Activated CD4-positive, alpha-beta memory T cell treated with anti-CD3 and anti-CD28 coated beads for 36 hours (primary cell): ENCODE measurements at regions of chr21 and their contacts with region 1.

Region 1: GRCh38 chr21:25734904-25735645 is at the starts of genes ATP5PF and GABPA:
- DNase-seq: peak; percentile 99
- H3K4me3 Mint-ChIP-seq: peak within 1 kb of the TSS; percentile 98
- H3K27ac Mint-ChIP-seq: peak within 1 kb of the TSS; percentile 100
- H3K4me1 Mint-ChIP-seq: peaks cover 52% of the 10 kb centered on the region
- H3K27me3 Mint-ChIP-seq: peaks cover 1% of the 10 kb centered on the region
- total RNA-seq, gene ATP5PF: 150 to 151 TPM
- total RNA-seq, gene GABPA: 22.3 to 24.7 TPM

Region 2: DNA sequence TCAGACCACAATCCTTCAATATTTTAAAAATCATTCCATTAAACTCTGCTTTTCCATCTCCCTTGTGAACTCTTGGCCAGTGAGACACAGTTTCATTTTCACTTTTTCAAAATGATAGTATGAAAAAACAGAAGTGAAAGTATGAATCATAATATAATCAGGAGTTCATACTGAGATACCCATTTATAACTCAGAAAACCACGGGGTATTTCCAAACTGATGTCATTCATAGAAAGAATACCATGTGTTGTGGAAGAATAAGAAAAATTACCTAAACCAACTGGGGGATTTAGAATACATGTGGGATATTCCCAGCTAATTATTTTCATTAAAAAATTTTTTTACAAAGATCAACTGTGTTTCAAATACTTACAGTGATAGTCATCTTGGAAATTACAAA is 277.7 kb before region 1 on chr21:
- CTCF ChIA-PET with region 1: no interaction called
- POLR2A ChIA-PET with region 1: no interaction called
- intact Hi-C with region 1: loop called (anchors 1 kb)
- DNase-seq: no peak
- H3K4me3 Mint-ChIP-seq: peak overlapping the region; percentile 68
- H3K27ac Mint-ChIP-seq: peak overlapping the region; percentile 93
- H3K4me1 Mint-ChIP-seq: peaks cover 77% of the 10 kb centered on the region
- H3K27me3 Mint-ChIP-seq: no peaks in the 10 kb centered on the region

Region 3: DNA sequence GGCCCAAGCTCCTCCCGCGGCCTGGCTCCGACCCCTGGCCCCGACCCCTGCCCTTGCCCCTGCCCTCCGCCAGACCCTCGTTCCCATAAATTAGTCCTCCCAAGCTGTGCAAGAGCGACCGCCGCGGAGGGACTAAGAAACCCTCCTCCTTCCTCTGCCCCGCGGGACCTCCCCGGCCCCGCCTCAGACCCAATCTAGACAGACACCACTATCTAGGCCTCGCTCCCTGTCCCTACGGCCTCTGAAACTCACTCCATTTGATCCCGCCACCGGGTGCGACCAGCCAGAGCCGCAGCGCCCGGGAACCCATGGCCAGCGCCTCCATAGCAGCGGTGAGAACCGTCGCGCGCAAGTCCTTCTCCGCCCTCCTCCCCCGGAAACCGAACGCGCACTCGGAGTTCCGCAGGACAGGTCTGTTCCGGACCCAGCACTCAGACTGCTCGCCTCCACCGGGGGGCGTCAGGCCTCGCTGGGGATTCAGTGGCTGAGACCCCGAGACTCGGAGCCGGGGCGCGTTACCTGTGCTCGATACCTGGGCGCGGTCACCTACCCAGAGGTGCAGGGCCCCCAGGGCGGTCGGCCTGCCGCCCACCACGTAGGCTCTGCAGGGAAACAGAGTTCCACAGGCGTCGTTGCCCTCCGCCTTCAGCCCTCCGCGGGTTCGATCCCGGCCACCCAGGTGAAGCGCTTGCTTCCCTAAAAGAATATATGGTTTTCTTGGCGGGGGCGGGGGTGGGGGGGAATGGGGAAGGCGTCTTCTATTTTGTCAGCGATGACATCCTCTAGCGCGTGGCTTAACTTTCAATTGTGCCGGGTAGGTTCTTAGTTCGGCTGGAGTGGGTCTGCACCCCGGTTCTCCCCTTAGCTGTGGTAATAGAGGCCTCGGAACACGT is 127.7 kb before region 1 on chr21 and contains the start of gene MRPL39:
- CTCF ChIA-PET with region 1: interaction called, 32 read pairs
- POLR2A ChIA-PET with region 1: interaction called, 7 read pairs
- intact Hi-C with region 1: loop called (anchors 1 kb)
- DNase-seq: peak; percentile 93
- H3K4me3 Mint-ChIP-seq: peak within 1 kb of the TSS; percentile 97
- H3K27ac Mint-ChIP-seq: peak within 1 kb of the TSS; percentile 91
- H3K4me1 Mint-ChIP-seq: peaks cover 41% of the 10 kb centered on the region
- H3K27me3 Mint-ChIP-seq: no peaks in the 10 kb centered on the region
- total RNA-seq, gene MRPL39: 71.7 to 73.6 TPM

Region 4: DNA sequence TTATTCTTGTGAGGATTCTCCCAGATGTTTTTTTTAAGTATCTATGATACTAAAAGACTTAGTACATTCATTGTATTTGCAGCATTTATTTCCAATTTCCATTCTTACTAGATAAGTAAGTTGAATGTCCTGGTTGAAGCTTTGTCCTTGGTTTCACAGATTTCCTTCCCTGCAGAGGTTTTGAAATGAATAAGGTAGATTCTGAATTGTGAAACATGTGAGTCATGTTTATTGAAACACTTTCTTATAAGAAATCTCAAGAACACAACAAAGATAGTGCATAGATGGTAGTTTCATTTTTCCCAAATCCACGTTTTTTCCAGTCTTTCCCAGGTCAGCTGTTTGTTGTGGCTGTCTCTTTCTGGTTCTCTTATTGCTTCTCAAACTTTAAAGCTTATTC is 24.5 kb after region 1 on chr21:
- CTCF ChIA-PET with region 1: no interaction called
- POLR2A ChIA-PET with region 1: interaction called, 4 read pairs
- intact Hi-C with region 1: loop called (anchors 2 kb)
- DNase-seq: no peak
- H3K4me3 Mint-ChIP-seq: no peak overlapping the region
- H3K27ac Mint-ChIP-seq: peak overlapping the region; percentile 50
- H3K4me1 Mint-ChIP-seq: peaks cover 29% of the 10 kb centered on the region
- H3K27me3 Mint-ChIP-seq: no peaks in the 10 kb centered on the region

Region 5: GRCh38 chr21:25809013-25809412 is 73.9 kb after region 1 on chr21:
- CTCF ChIA-PET with region 1: interaction called, 3 read pairs
- POLR2A ChIA-PET with region 1: no interaction called
- intact Hi-C with region 1: loop called (anchors 2 kb)
- DNase-seq: peak; percentile 24
- H3K4me3 Mint-ChIP-seq: no peak overlapping the region
- H3K27ac Mint-ChIP-seq: no peak overlapping the region
- H3K4me1 Mint-ChIP-seq: peaks cover 12% of the 10 kb centered on the region
- H3K27me3 Mint-ChIP-seq: peaks cover 4% of the 10 kb centered on the region